Testis (tissue), 5 donors: ENCODE measurements at regions of chr2 and their contacts with region 1.

Region 1: DNA sequence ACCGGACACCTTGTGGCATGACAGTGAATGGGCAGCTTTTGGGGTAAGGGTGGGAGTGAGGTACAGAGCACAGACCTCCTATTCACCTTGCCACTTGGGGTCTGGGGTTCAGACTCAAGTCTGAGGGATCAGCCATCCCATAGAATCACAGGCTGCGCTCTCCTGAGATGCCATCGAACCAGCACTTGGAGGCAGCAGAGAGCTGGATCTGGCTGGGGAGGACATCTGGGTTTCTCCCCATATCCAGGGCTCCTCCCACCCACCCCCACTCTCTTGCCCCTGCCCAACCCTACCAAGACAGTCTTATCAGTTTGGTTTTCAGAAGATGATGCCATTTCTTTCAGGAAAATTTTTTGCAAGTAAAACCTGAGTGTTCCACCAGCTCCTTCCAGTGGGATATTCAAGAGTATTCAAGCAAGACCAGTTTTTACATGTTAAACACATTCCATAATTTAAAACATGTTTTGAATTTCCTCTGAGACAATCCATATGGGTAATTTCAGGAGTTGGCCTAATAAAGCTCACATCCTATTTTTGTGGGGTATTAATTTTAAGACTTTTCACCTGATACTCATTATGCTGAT is 29.2 kb upstream of the TEX44 start:
- DNase-seq: peak; percentile 59
- H3K4me3 ChIP-seq: no peak overlapping the region
- H3K27ac ChIP-seq: no peak overlapping the region
- H3K4me1 ChIP-seq: no peaks in the 10 kb centered on the region
- H3K27me3 ChIP-seq: no peaks in the 10 kb centered on the region
- CTCF ChIP-seq: peak in 2 of 3 experiments; percentile 27 to 50
- POLR2A ChIP-seq: no peak

Region 2: DNA sequence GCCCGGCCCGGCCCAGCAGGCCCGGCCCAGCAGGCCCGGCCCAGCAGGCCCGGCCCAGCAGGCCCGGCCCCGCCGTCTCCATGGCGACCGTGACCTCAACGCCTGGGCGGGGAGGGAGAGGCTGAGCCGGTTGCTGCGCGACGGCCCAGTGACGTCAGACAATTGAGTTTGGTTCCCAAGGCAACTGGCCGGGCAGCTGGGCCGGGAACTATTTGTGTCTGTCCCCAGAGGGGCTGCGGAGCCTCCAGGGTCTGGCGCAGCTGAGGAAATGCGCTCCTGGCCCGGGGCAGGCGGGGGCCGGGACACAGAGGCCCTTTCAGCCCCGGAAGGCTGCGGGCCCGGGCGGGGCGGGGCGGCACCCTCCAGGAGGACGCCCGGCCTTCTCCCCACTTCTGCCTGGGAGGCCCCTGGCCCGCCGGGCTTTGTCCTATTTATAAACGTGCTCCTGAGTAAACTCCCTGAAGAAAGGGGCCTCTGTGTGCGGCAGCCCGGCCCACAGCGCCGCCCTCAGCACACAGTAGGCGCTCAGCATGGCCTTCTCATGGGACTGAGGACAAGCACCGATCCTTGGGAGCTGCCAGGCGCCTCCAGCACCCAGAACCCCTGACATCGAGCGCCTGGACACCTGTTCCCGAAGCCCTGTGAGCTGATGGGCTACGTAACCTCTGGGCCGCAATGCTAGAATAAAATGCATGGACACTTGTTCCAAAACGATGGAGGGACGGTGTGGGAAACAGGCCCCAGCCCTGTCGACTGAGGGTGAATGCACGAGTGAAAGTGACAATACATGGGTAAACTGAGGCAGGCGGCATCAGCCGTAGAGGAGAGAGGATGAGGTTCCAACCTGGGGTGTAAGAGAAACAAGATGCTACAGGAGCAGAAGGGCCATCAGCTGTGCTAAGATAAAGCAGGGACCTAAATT is 41.5 kb after region 1 on chr2:
- intact Hi-C with region 1: loop called (anchors 5 kb)
- DNase-seq: peak; percentile 99
- H3K4me3 ChIP-seq: peak overlapping the region; percentile 53 to 63
- H3K27ac ChIP-seq: peak overlapping the region; percentile 93 to 98
- H3K4me1 ChIP-seq: peaks cover 25% of the 10 kb centered on the region
- H3K27me3 ChIP-seq: no peaks in the 10 kb centered on the region
- CTCF ChIP-seq: no peak
- POLR2A ChIP-seq: no peak

Region 3: DNA sequence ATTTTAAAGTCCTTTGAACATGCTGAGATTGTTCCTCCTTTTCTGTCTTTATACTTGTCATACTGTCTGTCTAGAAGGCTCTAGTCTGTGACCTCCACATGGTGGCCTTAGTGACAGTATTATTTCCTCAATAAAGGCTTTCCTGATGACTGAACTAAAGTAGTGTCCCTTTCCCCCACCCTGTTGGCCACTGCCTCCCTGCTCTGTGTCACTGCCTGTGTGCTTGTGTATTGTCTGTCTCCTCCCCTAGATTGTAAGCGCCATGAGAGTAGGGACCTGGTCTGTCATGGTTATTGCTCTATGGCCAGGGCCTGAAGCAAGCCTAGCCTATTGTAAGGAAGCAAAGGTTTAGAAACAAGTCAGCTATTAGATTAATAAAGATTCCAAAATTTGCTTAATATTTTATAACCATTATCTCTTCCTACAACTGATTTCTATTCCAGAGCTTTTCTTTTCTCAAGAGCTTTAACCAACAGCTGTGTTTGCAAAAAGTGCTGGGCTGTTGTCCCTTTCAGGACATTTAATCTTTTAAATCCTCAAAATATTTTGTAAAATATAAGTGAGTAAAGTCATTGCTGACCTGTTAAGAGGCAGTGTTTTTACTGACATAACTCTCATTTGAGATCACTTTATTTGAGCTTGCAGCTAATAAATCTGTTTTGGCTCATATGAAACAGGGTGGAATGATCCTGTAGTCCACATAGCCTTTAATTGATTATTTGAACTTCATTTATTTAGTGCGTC is 433.5 kb after region 1 on chr2:
- intact Hi-C with region 1: no loop called
- DNase-seq: no peak
- H3K4me3 ChIP-seq: no peak overlapping the region
- H3K27ac ChIP-seq: no peak overlapping the region
- H3K4me1 ChIP-seq: peaks cover 2% of the 10 kb centered on the region
- H3K27me3 ChIP-seq: no peaks in the 10 kb centered on the region
- CTCF ChIP-seq: no peak
- POLR2A ChIP-seq: no peak